PC-3 (cell line): ENCODE measurements at regions of chr5 and their contacts with region 1.

Region 1: DNA sequence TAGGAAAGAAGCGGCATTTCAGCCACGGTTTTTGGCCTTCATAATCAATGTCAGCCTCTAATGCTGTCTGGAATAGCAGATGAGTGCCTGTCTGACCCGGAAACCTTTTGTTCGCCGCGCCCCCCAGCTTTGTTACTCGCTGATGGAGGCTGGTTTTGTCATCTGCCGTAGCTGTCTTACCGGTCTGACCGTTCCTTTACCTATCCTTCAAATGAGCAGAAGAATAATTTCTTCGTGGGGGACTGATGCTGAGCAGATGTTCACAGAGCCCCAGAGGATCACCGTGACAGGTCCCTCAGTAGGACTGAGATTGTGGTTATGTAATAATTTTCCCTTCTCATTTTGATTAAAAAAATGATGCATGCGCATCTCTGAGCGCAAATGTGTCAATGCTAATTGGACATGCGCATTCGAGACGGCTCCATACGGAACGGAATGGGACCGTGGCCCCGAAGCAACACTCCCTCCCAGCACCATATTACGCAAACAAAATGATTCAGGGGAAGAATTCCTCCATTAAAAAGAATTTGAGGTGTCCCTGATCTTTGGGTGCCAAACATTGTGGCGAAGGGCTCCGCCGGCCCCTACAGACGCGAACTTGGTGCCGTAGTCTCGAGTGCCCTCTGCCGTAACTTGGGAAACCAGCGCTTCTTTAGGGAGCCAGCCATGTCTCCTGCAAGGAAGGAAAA is 27.6 kb downstream of the TLX3 start:
- DNase-seq: peak; percentile 74
- ATAC-seq: peak; percentile 86
- H3K4me3 ChIP-seq: peak overlapping the region; percentile 76
- H3K27ac ChIP-seq: no peak overlapping the region
- H3K4me1 ChIP-seq: peaks cover 6% of the 10 kb centered on the region; the same call in 1 of the 2 replicates
- H3K27me3 ChIP-seq: no peaks in the 10 kb centered on the region
- CTCF ChIP-seq: peak; percentile 93

Region 2: GRCh38 chr5:170986598-170986997 is 350.1 kb before region 1 on chr5:
- CTCF ChIA-PET with region 1: no interaction called
- POLR2A ChIA-PET with region 1: no interaction called
- intact Hi-C with region 1: loop called (anchors 1 kb)
- DNase-seq: peak; percentile 29
- ATAC-seq: no peak; the same call in 1 of the 2 replicates
- H3K4me3 ChIP-seq: no peak overlapping the region
- H3K27ac ChIP-seq: no peak overlapping the region
- H3K4me1 ChIP-seq: no peaks in the 10 kb centered on the region
- H3K27me3 ChIP-seq: no peaks in the 10 kb centered on the region
- CTCF ChIP-seq: peak; percentile 54

Region 3: GRCh38 chr5:171207256-171207847 is 129.3 kb before region 1 on chr5:
- CTCF ChIA-PET with region 1: interaction called, 16 read pairs
- POLR2A ChIA-PET with region 1: no interaction called
- intact Hi-C with region 1: loop called (anchors 1 kb)
- DNase-seq: peak; percentile 84
- ATAC-seq: peak; percentile 67
- H3K4me3 ChIP-seq: no peak overlapping the region
- H3K27ac ChIP-seq: no peak overlapping the region
- H3K4me1 ChIP-seq: no peaks in the 10 kb centered on the region
- H3K27me3 ChIP-seq: 0 out of 2 replicates have a peak, but pooled peaks cover 3% of the 10 kb centered on the region
- CTCF ChIP-seq: peak; percentile 91

Region 4: GRCh38 chr5:171272996-171273970 is 63.4 kb before region 1 on chr5:
- CTCF ChIA-PET with region 1: interaction called, 19 read pairs
- POLR2A ChIA-PET with region 1: no interaction called
- intact Hi-C with region 1: loop called (anchors 1 kb)
- DNase-seq: peak; percentile 60
- ATAC-seq: peak; percentile 81
- H3K4me3 ChIP-seq: no peak overlapping the region
- H3K27ac ChIP-seq: no peak overlapping the region
- H3K4me1 ChIP-seq: no peaks in the 10 kb centered on the region
- H3K27me3 ChIP-seq: no peaks in the 10 kb centered on the region
- CTCF ChIP-seq: peak; percentile 77

Region 5: DNA sequence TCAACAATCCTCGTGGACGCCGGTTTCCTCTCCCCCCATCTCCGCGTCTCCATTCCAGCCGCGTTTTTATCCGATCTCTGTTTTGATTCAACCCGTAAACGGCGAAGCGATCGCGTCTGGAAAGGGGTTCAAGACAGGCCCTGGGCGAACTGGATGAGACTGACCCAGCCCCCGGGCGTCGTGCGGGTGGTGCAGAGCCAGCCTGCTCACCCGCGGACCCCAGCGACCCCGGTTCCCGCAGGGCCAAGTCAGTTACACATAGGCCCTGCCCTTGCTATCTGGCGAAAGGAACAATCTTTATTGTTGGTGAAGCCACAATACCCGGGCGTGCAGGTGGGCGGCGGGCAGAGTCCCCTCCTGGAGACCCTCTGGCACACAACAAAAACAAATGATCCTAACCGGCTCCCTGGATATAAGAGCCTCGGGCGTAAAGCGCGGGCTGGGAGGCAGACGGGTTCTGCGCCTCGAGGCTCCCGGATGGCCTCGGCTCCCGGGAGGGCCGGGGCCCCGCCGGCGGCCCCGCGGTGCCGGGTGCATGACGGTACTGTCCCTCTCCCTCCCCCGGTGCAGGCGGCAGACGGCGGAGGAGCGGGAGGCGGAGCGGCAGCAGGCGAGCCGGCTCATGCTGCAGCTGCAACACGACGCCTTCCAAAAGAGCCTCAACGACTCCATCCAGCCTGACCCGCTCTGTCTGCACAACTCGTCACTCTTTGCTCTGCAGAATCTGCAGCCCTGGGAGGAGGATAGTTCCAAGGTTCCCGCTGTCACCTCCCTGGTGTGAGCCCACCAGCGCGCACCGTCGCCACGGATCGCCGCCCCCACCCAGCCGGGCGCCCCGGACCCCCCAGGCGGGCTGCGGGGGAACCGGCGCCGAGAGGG is 25.6 kb before region 1 on chr5:
- CTCF ChIA-PET with region 1: no interaction called
- POLR2A ChIA-PET with region 1: no interaction called
- intact Hi-C with region 1: no loop called
- DNase-seq: peak; percentile 50
- ATAC-seq: peak; percentile 79
- H3K4me3 ChIP-seq: peak overlapping the region; percentile 23
- H3K27ac ChIP-seq: no peak overlapping the region
- H3K4me1 ChIP-seq: peaks cover 7% of the 10 kb centered on the region; the same call in 1 of the 2 replicates
- H3K27me3 ChIP-seq: peaks cover 25% of the 10 kb centered on the region
- CTCF ChIP-seq: no peak